Activated CD4-positive, alpha-beta T cell treated with anti-CD3 and anti-CD28 coated beads, Interleukin-2, amount 10 ng/mL, durations not matched to agents 24 days and 14 days (primary cell): ENCODE measurements at regions of chr11 and their contacts with region 1.

Region 1: DNA sequence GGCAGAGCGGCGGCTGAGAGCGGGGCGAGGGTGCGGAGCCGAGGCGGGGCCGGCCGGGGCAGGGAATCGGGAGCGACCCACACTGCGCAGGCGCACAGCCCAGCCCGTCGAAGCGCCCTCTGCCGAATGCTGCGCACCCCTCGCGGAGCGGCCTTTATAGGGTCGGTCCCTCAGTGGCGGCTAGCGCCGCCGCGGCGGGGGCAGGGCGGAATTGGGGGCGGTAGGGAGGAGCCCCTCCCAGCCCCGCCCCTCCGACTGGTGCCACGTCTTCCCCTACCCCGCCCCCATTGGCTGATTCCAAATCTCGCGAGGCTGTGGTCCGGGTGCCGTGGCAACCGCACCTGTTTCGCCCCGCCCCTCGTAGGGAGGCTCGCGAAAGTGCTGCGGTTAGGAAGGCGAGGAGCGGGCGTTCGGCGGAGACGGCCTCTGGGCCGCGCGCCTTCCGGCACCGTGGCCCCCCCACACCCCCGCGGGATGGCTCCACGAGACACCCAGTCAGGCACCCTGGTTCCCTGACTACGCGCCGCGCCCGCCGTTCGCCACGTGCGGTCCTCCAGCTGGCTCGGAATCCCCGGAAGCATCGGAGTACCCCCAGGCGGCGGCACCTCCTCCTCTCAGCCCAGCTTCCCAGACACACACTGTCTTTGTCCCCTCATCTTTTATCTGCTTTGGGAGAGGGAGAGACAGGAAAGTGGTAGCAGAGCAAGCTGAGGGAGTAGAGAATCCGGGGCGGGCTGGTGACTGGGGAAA is at the start of gene EHD1:
- DNase-seq: peak; percentile 100
- H3K4me3 Mint-ChIP-seq: peak within 1 kb of the TSS; percentile 100
- H3K27ac Mint-ChIP-seq: peak within 1 kb of the TSS; percentile 97
- H3K4me1 Mint-ChIP-seq: peaks cover 58% of the 10 kb centered on the region
- H3K27me3 Mint-ChIP-seq: no peaks in the 10 kb centered on the region
- total RNA-seq, gene EHD1: 93.0 and 101 TPM in 2 replicates

Region 2: GRCh38 chr11:64846998-64847666 is 31.5 kb before region 1 on chr11:
- intact Hi-C with region 1: loop called (anchors 2 kb)
- DNase-seq: peak; percentile 97
- H3K4me3 Mint-ChIP-seq: no peak overlapping the region
- H3K27ac Mint-ChIP-seq: no peak overlapping the region
- H3K4me1 Mint-ChIP-seq: peaks cover 46% of the 10 kb centered on the region
- H3K27me3 Mint-ChIP-seq: peaks cover 2% of the 10 kb centered on the region

Region 3: DNA sequence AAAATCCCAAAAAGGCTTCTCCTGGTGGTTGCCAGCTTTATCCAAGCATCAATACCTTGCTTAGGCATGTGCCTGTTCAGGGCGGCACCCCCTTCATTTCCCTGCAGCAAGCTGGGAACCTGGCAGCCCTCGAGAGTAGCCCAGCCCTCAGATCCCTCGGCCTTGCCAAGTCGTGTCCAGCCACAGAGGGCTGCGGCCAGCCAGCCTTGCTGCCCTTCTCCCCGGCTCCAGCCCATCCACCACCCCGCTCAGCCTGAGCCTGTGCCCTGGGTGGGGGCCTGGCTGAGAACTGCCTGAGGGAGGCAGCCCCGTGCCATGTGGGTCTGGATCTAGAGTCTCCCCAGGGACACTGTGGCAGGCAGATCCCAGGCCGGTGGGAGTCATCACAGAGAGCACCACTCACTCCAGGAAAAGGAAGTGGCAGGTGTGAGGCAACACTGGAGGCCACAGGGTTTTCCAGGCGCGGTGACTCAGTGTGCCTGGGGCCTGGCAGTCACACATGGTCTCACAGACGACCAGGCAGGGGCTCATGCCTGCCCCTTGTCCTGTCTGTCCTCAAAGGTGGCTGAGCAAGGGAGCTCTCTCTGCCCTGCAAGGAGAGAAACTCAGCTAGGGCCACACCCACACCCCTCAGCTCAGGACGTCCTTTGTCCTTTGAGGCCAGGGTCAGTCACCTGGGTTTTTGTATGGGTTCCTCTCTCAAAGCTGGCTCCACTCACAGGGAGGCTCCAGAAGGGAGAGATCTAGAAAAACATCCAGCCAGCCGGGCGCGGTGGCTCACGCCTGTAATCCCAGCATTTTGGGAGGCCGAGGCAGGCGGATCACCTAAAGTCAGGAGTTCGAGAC is 22.1 kb before region 1 on chr11:
- intact Hi-C with region 1: loop called (anchors 1 kb)
- DNase-seq: peak; percentile 79
- H3K4me3 Mint-ChIP-seq: peak overlapping the region; percentile 72
- H3K27ac Mint-ChIP-seq: peak overlapping the region; percentile 85
- H3K4me1 Mint-ChIP-seq: peaks cover 80% of the 10 kb centered on the region
- H3K27me3 Mint-ChIP-seq: no peaks in the 10 kb centered on the region

Region 4: DNA sequence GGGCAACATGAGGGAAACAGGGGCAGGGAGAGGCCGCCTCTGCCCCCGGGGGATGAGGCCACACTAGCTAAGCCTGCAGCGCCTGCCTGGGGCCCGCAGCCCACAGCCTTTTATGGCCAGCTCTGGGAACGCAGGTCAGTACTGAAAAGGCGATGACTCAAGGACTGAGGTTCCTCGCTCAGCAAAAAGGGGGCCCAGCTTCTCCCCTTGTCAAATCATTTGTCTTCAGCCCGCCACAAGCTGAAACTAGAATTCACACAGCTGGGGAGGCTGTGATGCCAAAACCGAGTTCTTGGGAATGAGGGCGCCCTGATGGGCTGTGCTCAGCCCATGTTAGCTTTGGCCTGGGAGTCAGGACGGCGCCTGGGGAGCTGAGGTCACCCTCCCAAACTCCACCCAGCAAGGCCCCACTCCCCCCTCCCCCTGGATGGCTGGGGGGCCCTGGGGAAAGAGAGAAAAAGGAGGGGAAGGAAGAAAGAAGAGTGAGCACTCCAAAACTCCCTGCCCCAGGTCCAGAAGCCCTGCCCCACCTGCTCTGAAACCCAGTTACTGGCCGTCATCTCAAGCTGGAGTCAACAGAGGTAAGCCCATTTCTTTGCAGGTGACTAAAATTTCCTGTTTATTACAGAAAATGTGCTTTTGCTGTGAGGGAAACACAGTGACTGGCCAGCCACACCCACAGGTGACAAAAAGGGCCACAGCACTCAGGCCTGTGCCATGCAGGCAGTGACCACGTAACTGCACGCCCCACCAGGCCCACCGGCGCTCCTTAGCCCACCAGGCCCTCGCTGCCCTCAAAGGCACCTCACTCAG is 14.0 kb before region 1 on chr11:
- intact Hi-C with region 1: loop called (anchors 1 kb)
- DNase-seq: peak; percentile 72
- H3K4me3 Mint-ChIP-seq: peak overlapping the region; percentile 76
- H3K27ac Mint-ChIP-seq: peak overlapping the region; percentile 95
- H3K4me1 Mint-ChIP-seq: peaks cover 76% of the 10 kb centered on the region
- H3K27me3 Mint-ChIP-seq: no peaks in the 10 kb centered on the region

Region 5: DNA sequence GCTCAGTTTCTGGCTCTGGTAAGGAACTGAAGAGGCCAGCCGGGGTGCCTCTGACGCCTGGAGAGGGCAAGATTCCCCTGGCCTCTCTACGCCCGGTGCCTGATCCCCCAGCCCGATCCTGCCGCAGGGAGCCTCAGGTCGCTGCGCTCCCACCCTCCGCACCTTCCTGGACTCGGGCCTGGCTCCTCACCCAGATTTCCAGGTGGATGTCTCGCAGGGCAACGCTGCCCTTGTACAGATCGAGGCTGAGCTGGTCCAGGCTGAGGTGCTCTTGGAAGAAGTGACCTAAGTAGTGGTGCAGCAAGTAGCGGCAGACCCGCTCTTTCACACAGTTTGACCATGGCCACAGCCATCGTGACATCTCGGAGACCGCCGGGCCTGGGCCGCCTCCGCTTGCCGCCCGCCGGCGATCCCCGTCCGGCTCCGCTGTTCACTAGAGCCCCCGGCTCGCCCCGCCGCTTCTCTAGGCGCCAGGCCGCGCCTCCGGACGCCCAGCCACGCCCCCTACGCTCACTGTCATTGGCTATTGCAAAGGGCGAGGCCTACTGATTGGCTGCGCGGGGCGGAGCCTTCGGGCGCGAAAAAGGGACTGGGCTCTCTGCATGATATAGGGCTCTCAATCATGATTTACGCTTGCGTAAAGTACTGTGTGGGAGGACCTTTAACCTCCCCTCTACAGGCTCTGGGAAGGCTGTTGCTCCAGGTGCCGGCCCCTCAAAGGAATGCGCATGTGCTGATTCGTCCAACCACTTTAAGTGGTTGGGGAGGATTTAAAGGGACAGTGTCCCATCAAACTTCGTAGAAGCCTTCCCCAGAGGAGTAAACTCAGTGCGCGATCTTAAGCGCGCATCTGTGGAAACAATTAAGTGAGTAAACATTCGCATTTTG is 38.4 kb after region 1 on chr11 and contains the start of gene ATG2A:
- intact Hi-C with region 1: loop called (anchors 2 kb)
- DNase-seq: peak; percentile 100
- H3K4me3 Mint-ChIP-seq: peak within 1 kb of the TSS; percentile 90
- H3K27ac Mint-ChIP-seq: peak within 1 kb of the TSS; percentile 92
- H3K4me1 Mint-ChIP-seq: peaks cover 23% of the 10 kb centered on the region
- H3K27me3 Mint-ChIP-seq: no peaks in the 10 kb centered on the region
- total RNA-seq, gene ATG2A: 22.5 and 23.1 TPM in 2 replicates

Region 6: DNA sequence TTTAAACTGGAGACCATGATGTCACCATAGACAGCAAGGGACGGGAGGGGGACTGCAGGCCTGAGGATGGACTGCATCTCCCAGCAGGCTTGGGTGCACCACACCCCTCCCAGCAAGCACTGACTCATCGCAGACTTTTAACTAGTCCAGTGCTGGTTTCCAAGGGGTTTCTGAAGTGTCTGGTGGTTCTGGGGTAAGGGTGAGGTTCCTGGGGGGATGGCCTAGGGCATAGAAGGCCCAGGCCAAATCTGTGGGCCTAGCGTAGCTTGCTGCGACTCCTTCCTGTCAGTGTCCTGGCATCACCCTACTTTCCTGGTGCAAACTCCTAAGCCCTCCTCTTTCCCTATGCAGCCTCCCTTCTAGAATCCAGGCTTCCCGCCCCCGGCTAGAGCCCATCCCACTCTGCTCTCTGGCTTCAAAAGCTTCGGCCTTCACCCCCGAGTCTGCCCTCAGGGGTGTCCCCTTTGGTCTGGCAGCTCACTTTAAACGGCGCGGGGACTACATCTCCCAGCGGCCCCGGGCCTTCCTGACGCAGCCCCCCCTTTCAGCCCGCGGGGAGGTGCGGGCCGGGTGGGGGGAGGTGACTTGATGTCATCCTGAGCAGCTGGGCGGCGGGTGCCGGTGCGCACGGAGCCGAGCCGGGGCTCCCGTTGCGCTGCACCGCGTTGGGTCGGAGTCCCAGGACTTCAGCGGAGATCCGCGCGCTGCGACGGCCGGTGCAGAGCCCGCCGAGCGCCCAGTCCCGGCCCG is 45.6 kb after region 1 on chr11 and contains the start of gene PPP2R5B:
- intact Hi-C with region 1: loop called (anchors 2 kb)
- DNase-seq: peak; percentile 98
- H3K4me3 Mint-ChIP-seq: peak within 1 kb of the TSS; percentile 91
- H3K27ac Mint-ChIP-seq: peak within 1 kb of the TSS; percentile 99
- H3K4me1 Mint-ChIP-seq: peaks cover 10% of the 10 kb centered on the region
- H3K27me3 Mint-ChIP-seq: no peaks in the 10 kb centered on the region
- total RNA-seq, gene PPP2R5B: 11.4 and 16.7 TPM in 2 replicates